Naive thymus-derived CD4-positive, alpha-beta T cell (primary cell): ENCODE measurements at regions of chr21 and their contacts with region 1.

Region 1: DNA sequence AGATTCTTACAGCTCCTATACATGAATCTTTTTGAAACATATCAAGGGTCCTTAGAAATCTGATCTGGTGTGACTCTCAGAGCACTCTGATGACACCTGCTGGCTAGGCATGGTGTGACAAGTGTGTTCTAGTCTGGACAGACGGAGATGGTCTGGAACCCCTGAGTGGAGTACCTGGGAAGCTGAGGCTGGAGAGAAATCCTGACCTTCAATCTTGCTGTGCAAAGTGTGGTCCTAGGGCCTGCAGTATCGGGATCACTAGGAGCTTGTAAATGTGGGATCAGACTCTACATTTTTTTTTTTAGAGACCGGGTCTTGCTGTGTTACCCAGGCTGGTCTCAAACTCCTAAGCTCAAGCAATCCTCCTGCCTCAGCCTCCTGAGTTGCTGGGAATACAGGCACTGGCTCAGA is 78.6 kb upstream of the SOD1 start:
- DNase-seq: peak; percentile 50 to 77 (median 66)
- ATAC-seq: peak; percentile 90
- H3K4me3 ChIP-seq: no peak overlapping the region
- H3K4me3 Mint-ChIP-seq: no peak overlapping the region
- H3K27ac ChIP-seq: no peak overlapping the region
- H3K27ac Mint-ChIP-seq: peak overlapping the region in 3 of 9 donors; percentile 10 to 76 (median 32)
- H3K4me1 ChIP-seq: no peaks in the 10 kb centered on the region
- H3K4me1 Mint-ChIP-seq: peaks cover 0 to 8% (median 4%) of the 10 kb centered on the region in 7 donors
- H3K27me3 ChIP-seq: no peaks in the 10 kb centered on the region
- H3K27me3 Mint-ChIP-seq: peaks cover 0 to 25% (median 0%) of the 10 kb centered on the region in 5 donors

Region 2: GRCh38 chr21:31198575-31198974 is 382.3 kb before region 1 on chr21:
- CTCF ChIA-PET with region 1: interaction called, 32 read pairs
- POLR2A ChIA-PET with region 1: interaction called, 3 read pairs
- intact Hi-C with region 1: loop called (anchors 1 kb)
- DNase-seq: peak in 5 of 9 donors; percentile 51 to 63 (median 58)
- ATAC-seq: peak; percentile 74
- H3K4me3 ChIP-seq: no peak overlapping the region
- H3K4me3 Mint-ChIP-seq: peak overlapping the region in 3 of 10 donors; percentile 11 to 40 (median 13)
- H3K27ac ChIP-seq: no peak overlapping the region
- H3K27ac Mint-ChIP-seq: no peak overlapping the region
- H3K4me1 ChIP-seq: no peaks in the 10 kb centered on the region
- H3K4me1 Mint-ChIP-seq: peaks cover 14 to 42% (median 36%) of the 10 kb centered on the region in 7 donors
- H3K27me3 ChIP-seq: no peaks in the 10 kb centered on the region
- H3K27me3 Mint-ChIP-seq: no peaks in the 10 kb centered on the region

Region 3: GRCh38 chr21:31213795-31214194 is 367.1 kb before region 1 on chr21:
- CTCF ChIA-PET with region 1: interaction called, 16 read pairs
- POLR2A ChIA-PET with region 1: no interaction called
- intact Hi-C with region 1: loop called in 1 of 2 experiments (anchors 1 kb)
- DNase-seq: peak in 6 of 9 donors; percentile 12 to 48 (median 26)
- ATAC-seq: no peak
- H3K4me3 ChIP-seq: no peak overlapping the region
- H3K4me3 Mint-ChIP-seq: no peak overlapping the region
- H3K27ac ChIP-seq: no peak overlapping the region
- H3K27ac Mint-ChIP-seq: no peak overlapping the region
- H3K4me1 ChIP-seq: no peaks in the 10 kb centered on the region
- H3K4me1 Mint-ChIP-seq: peaks cover 0 to 9% (median 0%) of the 10 kb centered on the region in 7 donors
- H3K27me3 ChIP-seq: no peaks in the 10 kb centered on the region
- H3K27me3 Mint-ChIP-seq: no peaks in the 10 kb centered on the region

Region 4: GRCh38 chr21:31509194-31510017 is 71.5 kb before region 1 on chr21:
- CTCF ChIA-PET with region 1: no interaction called
- POLR2A ChIA-PET with region 1: no interaction called
- intact Hi-C with region 1: loop called in 1 of 2 experiments (anchors 5 kb)
- DNase-seq: peak; percentile 24 to 81 (median 54)
- ATAC-seq: peak; percentile 66
- H3K4me3 ChIP-seq: no peak overlapping the region
- H3K4me3 Mint-ChIP-seq: peak overlapping the region in 8 of 10 donors; percentile 32 to 79 (median 60)
- H3K27ac ChIP-seq: no peak overlapping the region
- H3K27ac Mint-ChIP-seq: peak overlapping the region in 7 of 9 donors; percentile 7 to 83 (median 78)
- H3K4me1 ChIP-seq: peaks cover 6 to 16% of the 10 kb centered on the region in 2 donors
- H3K4me1 Mint-ChIP-seq: peaks cover 14 to 47% (median 34%) of the 10 kb centered on the region in 7 donors
- H3K27me3 ChIP-seq: no peaks in the 10 kb centered on the region
- H3K27me3 Mint-ChIP-seq: peaks cover 0 to 57% (median 0%) of the 10 kb centered on the region in 5 donors

Region 5: DNA sequence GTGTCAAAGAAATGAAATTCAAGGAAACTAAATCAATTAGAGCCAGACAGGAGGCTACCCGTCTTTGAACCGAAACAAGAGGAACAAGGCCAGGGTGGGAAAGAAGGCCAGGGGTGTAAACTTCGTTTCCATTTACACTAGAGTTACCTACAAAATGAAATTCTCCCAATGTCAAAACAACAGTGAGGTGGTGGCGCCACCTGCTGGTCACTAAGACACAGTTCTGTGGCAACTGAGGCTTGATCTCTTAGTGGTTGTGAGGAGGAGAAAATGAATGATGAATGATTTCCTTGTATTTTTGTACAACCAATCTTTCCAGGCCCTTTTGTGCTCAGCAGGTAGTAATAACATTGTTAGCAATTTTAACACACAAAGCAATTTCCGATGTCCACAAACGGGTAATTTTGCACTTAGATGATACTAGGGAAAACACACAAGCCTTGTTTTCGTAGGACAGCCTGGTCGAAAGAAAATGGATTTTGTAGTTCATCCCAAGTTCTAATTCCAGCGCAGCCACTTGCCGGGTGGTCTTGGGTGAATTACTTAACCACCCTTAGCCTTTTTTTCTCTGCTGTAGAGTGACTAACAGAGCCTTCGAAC is 23.8 kb after region 1 on chr21:
- CTCF ChIA-PET with region 1: interaction called, 6 read pairs
- POLR2A ChIA-PET with region 1: no interaction called
- intact Hi-C with region 1: loop called in 1 of 2 experiments (anchors 1 kb)
- DNase-seq: peak; percentile 32 to 71 (median 64)
- ATAC-seq: peak; percentile 83
- H3K4me3 ChIP-seq: no peak overlapping the region
- H3K4me3 Mint-ChIP-seq: no peak overlapping the region
- H3K27ac ChIP-seq: no peak overlapping the region
- H3K27ac Mint-ChIP-seq: no peak overlapping the region
- H3K4me1 ChIP-seq: no peaks in the 10 kb centered on the region
- H3K4me1 Mint-ChIP-seq: peaks cover 0 to 6% (median 0%) of the 10 kb centered on the region in 7 donors
- H3K27me3 ChIP-seq: no peaks in the 10 kb centered on the region
- H3K27me3 Mint-ChIP-seq: peaks cover 0 to 5% (median 0%) of the 10 kb centered on the region in 5 donors